PC-3 (cell line): ENCODE measurements at regions of chr3 and their contacts with region 1.

Region 1: DNA sequence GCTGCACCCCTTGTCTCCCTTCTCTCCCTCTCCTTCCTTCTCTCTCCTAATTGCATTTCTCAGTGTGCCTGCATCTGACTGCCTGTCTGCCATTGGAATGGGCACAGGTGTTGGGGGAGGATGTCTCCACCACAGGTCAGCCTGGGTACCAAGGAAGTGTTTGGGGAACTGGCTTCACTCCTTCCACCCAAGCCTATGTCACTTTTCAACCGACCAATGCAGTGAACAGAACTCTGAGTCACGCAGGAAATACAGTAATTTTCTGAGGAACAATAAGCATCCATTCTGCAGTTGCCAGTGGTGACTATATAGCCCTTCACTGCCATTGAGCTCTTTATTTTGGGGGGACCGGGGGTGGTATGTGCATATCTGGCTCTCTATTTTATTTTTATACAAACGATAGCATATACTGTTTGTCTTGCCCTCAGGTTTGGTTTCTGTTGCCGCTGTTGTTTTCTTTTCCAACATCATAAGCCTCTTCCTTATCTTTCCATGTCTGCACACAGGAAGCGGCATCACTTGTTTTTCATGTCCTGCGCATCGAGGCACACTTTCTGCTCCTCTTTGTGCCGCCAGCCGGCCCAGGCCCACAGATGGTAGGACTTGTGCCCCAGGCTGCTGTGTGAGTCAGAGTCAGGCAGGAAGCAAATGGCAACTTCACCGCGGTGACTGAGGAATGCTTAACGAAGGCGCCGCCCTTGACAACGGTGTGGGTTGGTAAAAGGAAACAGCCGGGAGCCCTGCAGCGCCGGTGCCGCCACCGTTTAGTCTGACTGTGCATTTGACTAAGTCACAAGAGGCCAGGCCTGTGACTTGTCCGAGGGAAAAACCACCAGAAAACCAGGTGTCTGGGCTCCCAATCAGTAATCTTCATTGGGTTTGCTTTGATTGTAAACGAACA is 21.1 kb upstream of the CDCP1 start:
- DNase-seq: peak; percentile 99
- ATAC-seq: peak; percentile 93
- H3K4me3 ChIP-seq: peak overlapping the region; percentile 34; the same call in 1 of the 2 replicates
- H3K27ac ChIP-seq: peak overlapping the region; percentile 96
- H3K4me1 ChIP-seq: peaks cover 44% of the 10 kb centered on the region
- H3K27me3 ChIP-seq: no peaks in the 10 kb centered on the region
- CTCF ChIP-seq: no peak

Region 2: DNA sequence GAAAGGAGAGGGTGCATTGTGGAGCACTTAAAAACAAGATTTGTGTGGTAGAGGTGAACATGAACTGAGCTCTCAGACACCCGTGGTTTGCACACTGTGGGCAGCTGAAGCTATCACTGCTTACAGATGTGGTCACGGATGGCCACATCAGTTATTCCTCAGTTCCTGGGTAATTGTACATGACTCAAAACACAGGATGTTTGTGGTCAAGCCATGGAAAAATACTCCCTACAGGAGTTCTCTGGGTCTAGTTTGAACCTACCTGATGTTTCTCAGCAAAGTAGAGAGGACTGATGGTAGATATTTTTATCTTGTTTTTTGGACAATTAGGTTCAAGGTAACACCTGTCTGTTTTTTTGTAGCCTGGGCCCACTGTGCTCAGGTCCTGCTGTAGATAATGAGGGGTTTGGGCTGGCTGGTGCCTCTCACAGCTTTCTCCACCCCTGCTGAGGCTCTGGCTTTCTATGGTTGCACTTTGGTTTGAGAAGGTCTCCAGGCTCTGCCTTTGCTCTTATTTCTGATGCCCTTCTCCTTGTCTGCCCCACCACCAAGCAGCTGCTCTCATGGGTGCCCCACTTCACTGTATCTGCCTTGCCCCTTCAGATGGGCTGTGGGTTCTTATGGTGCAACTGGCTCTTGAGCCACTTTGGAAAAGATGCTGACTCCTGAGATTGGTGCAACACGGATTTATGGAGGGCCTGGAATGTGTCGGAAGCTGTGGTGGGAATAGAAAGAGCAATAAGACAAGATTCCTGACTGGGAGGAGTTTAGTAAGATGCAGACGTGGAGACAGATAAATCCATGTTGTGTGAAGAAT is 61.2 kb before region 1 on chr3:
- CTCF ChIA-PET with region 1: no interaction called
- POLR2A ChIA-PET with region 1: no interaction called
- intact Hi-C with region 1: no loop called
- DNase-seq: peak; percentile 92
- ATAC-seq: peak; percentile 92
- H3K4me3 ChIP-seq: no peak overlapping the region
- H3K27ac ChIP-seq: peak overlapping the region; percentile 93
- H3K4me1 ChIP-seq: peaks cover 26% of the 10 kb centered on the region
- H3K27me3 ChIP-seq: no peaks in the 10 kb centered on the region
- CTCF ChIP-seq: no peak

Region 3: DNA sequence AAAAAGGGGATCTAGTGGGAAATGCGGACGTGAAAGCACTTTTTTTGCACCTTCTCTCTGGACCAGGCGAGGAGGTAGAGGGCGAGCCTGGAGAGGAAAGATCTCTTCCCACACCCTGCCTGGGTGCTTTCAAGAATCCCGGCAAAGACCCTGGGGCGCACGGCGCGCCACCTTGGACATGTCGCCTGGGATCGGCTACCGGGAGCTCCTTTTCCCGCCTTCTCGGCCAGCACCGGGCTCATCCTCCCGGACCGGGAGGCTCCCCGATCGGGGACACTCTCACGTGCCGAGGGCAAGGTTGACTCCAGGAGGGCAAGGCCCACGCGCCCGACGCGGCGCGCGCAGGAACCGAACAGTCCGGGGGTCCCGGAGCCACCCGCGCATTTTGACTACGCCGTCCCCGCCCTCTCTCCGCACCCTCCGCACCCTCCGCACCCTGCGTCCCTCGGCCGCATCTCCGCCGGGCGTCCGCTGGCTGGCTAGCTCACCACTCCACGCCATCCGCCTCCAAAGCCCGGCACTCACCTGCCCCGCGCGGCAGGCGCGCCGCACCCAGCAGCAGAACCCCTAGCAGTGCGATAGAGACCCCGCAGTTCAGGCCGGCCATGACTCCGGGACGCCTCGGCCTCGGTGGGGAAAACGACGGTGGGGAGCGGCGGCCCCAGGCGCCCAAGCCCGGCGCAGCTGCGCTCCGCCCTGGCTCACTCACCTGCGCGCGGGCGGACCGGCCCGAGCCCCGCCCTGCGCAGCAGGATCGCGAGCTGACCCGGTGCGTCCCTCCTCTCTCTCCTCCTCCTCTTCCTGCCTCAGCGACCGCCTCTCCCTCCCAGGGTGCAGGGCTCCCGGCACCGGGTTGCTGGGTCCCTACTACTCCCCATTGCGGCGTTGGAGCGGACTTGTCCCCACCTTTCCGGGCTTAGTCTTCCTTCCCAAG is 21.3 kb before region 1 on chr3 and contains the start of gene CDCP1:
- CTCF ChIA-PET with region 1: no interaction called
- POLR2A ChIA-PET with region 1: interaction called, 4 read pairs
- intact Hi-C with region 1: loop called (anchors 2 kb)
- DNase-seq: peak; percentile 81
- ATAC-seq: peak; percentile 93
- H3K4me3 ChIP-seq: peak within 1 kb of the TSS; percentile 98
- H3K27ac ChIP-seq: peak within 1 kb of the TSS; percentile 84
- H3K4me1 ChIP-seq: peaks cover 43% of the 10 kb centered on the region
- H3K27me3 ChIP-seq: no peaks in the 10 kb centered on the region
- CTCF ChIP-seq: no peak
- total RNA-seq, gene CDCP1: 120 and 124 TPM in 2 replicates

Region 4: DNA sequence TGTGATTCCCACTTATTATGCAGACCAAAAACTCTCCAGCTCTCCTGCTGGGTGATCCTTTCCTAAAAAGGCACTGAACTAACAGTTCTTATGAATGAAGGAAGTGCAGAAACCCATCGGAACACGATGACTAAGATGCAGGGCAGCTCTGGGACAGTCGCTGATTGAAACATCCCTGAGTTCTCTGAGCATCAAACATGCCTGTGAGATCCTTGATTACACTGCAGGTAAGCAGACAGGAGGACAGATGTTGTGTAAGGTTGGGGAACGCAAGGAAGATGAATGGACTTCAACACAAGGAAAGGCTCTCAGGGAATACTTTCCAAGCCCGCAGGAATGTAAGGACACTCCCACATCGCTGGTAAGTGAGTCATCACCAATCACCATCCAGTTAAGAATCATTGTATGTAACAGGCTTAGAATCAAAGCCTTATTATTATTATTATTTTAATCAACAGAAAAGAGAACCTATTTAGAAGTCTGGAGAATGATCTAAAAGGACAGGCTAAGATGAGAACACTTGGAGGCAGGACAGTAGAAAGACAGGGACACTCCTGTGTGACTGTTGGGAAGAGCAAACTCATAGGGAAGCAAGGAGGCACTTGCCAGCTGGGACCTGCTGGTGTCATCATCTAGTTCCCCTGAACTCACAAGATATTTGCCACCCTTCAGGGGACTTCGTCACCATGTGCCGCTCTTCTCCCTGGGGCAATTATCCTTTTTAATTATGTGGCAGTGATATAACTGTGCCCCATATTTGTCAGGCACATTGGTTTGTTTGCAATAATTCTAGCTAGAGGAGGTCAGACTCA is 32.8 kb after region 1 on chr3:
- CTCF ChIA-PET with region 1: no interaction called
- POLR2A ChIA-PET with region 1: no interaction called
- intact Hi-C with region 1: loop called (anchors 1 kb)
- DNase-seq: peak; percentile 96
- ATAC-seq: peak; percentile 86
- H3K4me3 ChIP-seq: peak overlapping the region; percentile 8; the same call in 1 of the 2 replicates
- H3K27ac ChIP-seq: peak overlapping the region; percentile 66
- H3K4me1 ChIP-seq: peaks cover 35% of the 10 kb centered on the region
- H3K27me3 ChIP-seq: no peaks in the 10 kb centered on the region
- CTCF ChIP-seq: no peak

Region 5: GRCh38 chr3:45343947-45344346 is 176.7 kb after region 1 on chr3:
- CTCF ChIA-PET with region 1: no interaction called
- POLR2A ChIA-PET with region 1: no interaction called
- intact Hi-C with region 1: no loop called
- DNase-seq: peak; percentile 48
- ATAC-seq: peak; percentile 46; the same call in 1 of the 2 replicates
- H3K4me3 ChIP-seq: no peak overlapping the region
- H3K27ac ChIP-seq: no peak overlapping the region
- H3K4me1 ChIP-seq: no peaks in the 10 kb centered on the region
- H3K27me3 ChIP-seq: peaks cover under 1% of the 10 kb centered on the region; the same call in 1 of the 2 replicates
- CTCF ChIP-seq: peak; percentile 52; the same call in 1 of the 2 replicates